ENCODE measurements at regions of chr14 and their contacts with region 1.

Region 1: GRCh38 chr14:55254581-55254980 is 16.6 kb upstream of the FBXO34 start:
- DNase-seq: no peak
- H3K4me3 ChIP-seq: no peak overlapping the region
- H3K27ac ChIP-seq: no peak overlapping the region
- H3K4me1 ChIP-seq: no peaks in the 10 kb centered on the region
- H3K27me3 ChIP-seq: peaks cover 19 to 24% of the 10 kb centered on the region in 2 experiments
- CTCF ChIP-seq: no peak
- POLR2A ChIP-seq: no peak

Region 2: DNA sequence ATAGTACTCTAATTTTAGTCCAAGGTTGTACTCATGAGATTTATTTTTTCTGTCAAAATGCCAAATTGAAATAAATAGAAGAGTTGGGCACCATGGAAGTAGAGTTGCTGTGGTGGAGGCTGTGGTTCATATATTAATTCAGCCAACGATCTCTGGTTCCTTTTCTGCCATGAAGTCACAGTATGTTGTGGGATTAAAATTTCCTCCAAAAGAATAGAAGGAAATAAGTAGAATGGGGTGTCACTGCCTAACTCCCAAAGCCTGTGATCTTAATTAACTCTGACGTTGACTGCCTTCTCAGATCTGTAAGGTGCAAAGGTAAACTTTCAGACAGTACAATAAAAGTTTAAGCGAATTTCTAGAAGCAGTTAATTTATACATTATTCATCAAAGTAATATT is 21.0 kb before region 1 on chr14:
- CTCF ChIA-PET with region 1: interaction called, 4 read pairs
- POLR2A ChIA-PET with region 1: no interaction called
- dilution Hi-C with region 1: no loop called
- intact Hi-C with region 1: loop called (anchors 2 kb)
- DNase-seq: no peak
- H3K4me3 ChIP-seq: no peak overlapping the region
- H3K27ac ChIP-seq: no peak overlapping the region
- H3K4me1 ChIP-seq: no peaks in the 10 kb centered on the region
- H3K27me3 ChIP-seq: peaks cover 5 to 21% of the 10 kb centered on the region in 2 experiments
- CTCF ChIP-seq: no peak
- POLR2A ChIP-seq: no peak

Measured in endothelial cell of umbilical vein (primary cell).